Activated naive CD4-positive, alpha-beta T cell treated with anti-CD3 and anti-CD28 coated beads for 36 hours (primary cell): ENCODE measurements at regions of chr1 and their contacts with region 1.

Region 1: GRCh38 chr1:88891318-88891950 is at the start of gene GTF2B:
- DNase-seq: peak; percentile 97
- H3K4me3 Mint-ChIP-seq: peak within 1 kb of the TSS; percentile 82
- H3K27ac Mint-ChIP-seq: peak within 1 kb of the TSS; percentile 96
- H3K4me1 Mint-ChIP-seq: peaks cover 36% of the 10 kb centered on the region
- H3K27me3 Mint-ChIP-seq: no peaks in the 10 kb centered on the region
- total RNA-seq, gene GTF2B: 35.2 to 36.1 TPM

Region 2: DNA sequence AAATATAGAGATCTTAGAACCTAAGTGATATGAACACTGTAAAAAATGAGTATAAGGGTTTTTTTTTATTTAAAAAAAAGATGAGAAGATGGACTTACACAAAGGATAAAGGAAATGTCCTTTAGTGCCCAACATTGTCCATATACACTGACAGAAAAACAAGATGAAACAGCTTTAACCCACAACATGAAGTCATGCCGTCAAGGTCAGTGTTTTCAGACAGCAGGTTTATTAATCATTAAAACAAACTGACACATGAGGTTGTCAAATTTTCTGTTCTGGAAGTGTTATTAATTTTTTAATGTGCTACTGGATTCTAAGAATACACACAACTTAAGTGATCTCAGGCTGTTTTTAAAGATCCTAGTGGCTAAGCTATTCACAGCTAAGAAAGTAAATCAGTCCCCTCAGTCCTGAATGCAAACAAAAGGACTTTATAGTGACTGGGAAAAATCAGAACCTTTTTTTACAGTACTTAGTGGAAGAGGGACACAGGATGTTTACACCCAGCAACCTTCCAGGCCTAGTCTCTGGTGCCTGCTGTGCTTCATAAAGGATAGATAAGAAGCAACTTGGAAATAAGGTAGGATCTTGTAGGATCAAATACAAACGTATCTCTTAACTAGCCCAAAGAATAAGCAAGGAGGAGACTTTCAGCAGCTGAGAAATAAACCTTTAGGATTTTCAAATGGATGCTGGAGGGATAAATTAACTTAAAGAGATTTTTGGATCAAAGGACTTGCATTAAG is 229.3 kb before region 1 on chr1:
- CTCF ChIA-PET with region 1: interaction called, 9 read pairs
- intact Hi-C with region 1: loop called (anchors 1 kb)
- DNase-seq: no peak
- H3K4me3 Mint-ChIP-seq: no peak overlapping the region
- H3K27ac Mint-ChIP-seq: no peak overlapping the region
- H3K4me1 Mint-ChIP-seq: peaks cover 28% of the 10 kb centered on the region
- H3K27me3 Mint-ChIP-seq: no peaks in the 10 kb centered on the region

Region 3: DNA sequence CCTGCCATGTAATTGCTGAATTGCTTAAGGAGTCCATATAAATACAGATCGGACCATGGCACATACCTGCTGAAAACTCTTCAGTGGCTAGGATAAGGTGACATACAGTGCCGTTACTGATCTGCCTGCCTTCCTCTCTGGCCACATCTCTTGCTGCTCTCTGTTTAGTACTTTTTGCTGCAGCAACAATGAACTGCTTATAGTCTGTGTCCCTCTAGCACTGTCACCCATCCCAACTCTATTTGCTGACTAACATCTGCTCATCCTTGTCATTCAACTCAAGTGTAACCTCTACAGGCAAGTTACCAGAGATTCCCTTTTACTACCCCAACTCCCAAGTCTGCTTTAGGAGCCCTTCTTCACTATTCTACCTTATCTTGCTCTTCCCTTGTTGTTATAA is 65.7 kb before region 1 on chr1:
- CTCF ChIA-PET with region 1: no interaction called
- intact Hi-C with region 1: no loop called
- DNase-seq: no peak
- H3K4me3 Mint-ChIP-seq: no peak overlapping the region
- H3K27ac Mint-ChIP-seq: no peak overlapping the region
- H3K4me1 Mint-ChIP-seq: no peaks in the 10 kb centered on the region
- H3K27me3 Mint-ChIP-seq: no peaks in the 10 kb centered on the region

Region 4: GRCh38 chr1:88867743-88868521 is 23.5 kb before region 1 on chr1:
- CTCF ChIA-PET with region 1: no interaction called
- intact Hi-C with region 1: loop called (anchors 1 kb)
- DNase-seq: no peak
- H3K4me3 Mint-ChIP-seq: no peak overlapping the region
- H3K27ac Mint-ChIP-seq: peak overlapping the region; percentile 84
- H3K4me1 Mint-ChIP-seq: peaks cover 57% of the 10 kb centered on the region
- H3K27me3 Mint-ChIP-seq: no peaks in the 10 kb centered on the region

Region 5: DNA sequence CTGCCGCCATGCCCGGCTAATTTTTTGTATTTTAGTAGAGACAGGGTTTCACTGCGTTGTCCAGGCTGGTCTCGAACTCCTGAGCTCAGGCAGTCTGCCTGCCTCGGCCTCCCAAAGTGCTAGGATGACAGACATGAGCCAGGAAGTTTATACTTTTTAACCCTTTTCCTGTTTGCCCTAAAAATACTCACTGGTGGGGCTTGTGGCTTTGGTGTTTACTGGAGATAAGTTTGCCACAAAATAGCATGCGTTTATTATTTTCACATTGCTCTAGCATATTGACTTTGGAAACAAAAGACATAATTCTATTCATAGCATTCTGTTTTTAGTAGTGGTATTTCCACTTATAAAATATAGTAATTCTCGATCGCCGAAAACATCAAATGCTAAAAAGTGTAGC is 19.7 kb after region 1 on chr1:
- CTCF ChIA-PET with region 1: no interaction called
- intact Hi-C with region 1: no loop called
- DNase-seq: no peak
- H3K4me3 Mint-ChIP-seq: no peak overlapping the region
- H3K27ac Mint-ChIP-seq: no peak overlapping the region
- H3K4me1 Mint-ChIP-seq: peaks cover 2% of the 10 kb centered on the region
- H3K27me3 Mint-ChIP-seq: no peaks in the 10 kb centered on the region

Region 6: GRCh38 chr1:88922214-88922613 is 30.8 kb after region 1 on chr1:
- CTCF ChIA-PET with region 1: no interaction called
- intact Hi-C with region 1: no loop called
- DNase-seq: peak; percentile 16
- H3K4me3 Mint-ChIP-seq: no peak overlapping the region
- H3K27ac Mint-ChIP-seq: no peak overlapping the region
- H3K4me1 Mint-ChIP-seq: peaks cover 1% of the 10 kb centered on the region
- H3K27me3 Mint-ChIP-seq: no peaks in the 10 kb centered on the region

Region 7: DNA sequence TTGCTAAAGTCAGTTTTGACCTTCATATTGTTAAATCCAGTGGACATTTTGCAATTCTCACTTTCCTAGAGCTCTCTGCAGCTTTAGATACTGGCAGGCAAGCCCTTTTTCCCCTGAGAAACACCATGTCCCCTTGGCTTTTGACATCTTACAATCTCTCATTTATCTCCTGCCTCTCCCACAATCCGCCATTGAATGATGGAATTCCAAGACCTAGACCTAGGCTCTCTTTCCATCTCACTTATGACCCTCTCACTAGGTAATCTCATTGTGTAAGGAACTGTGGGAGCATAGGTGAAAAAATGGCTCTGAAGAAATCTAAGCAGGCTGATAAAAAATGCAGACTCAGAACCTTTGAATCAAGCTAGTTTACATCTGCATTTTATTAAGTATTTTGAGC is 99.0 kb after region 1 on chr1:
- CTCF ChIA-PET with region 1: no interaction called
- intact Hi-C with region 1: loop called (anchors 1 kb)
- DNase-seq: no peak
- H3K4me3 Mint-ChIP-seq: peak overlapping the region; percentile 10
- H3K27ac Mint-ChIP-seq: peak overlapping the region; percentile 10
- H3K4me1 Mint-ChIP-seq: peaks cover 45% of the 10 kb centered on the region
- H3K27me3 Mint-ChIP-seq: no peaks in the 10 kb centered on the region

Region 8: GRCh38 chr1:89994805-89995597 is 1103.6 kb after region 1 on chr1 and contains the start of gene ZNF326:
- CTCF ChIA-PET with region 1: no interaction called
- intact Hi-C with region 1: loop called (anchors 1 kb)
- DNase-seq: peak; percentile 94
- H3K4me3 Mint-ChIP-seq: peak within 1 kb of the TSS; percentile 96
- H3K27ac Mint-ChIP-seq: peak within 1 kb of the TSS; percentile 90
- H3K4me1 Mint-ChIP-seq: peaks cover 42% of the 10 kb centered on the region
- H3K27me3 Mint-ChIP-seq: no peaks in the 10 kb centered on the region
- total RNA-seq, gene ZNF326: 17.4 to 17.9 TPM